Uterus (tissue), 4 donors: ENCODE measurements at regions of chr7 and their contacts with region 1.

Region 1: GRCh38 chr7:151315038-151315655 is 26.5 kb upstream of the NUB1 start:
- DNase-seq: peak; percentile 68 to 80
- H3K4me3 ChIP-seq: no peak overlapping the region
- H3K27ac ChIP-seq: no peak overlapping the region
- H3K4me1 ChIP-seq: no peaks in the 10 kb centered on the region
- H3K27me3 ChIP-seq: no peaks in the 10 kb centered on the region
- CTCF ChIP-seq: peak; percentile 80 to 84 (median 82)
- POLR2A ChIP-seq: no peak

Region 2: GRCh38 chr7:151038951-151039849 is 275.9 kb before region 1 on chr7:
- intact Hi-C with region 1: no loop called
- DNase-seq: peak; percentile 74 to 92
- H3K4me3 ChIP-seq: no peak overlapping the region
- H3K27ac ChIP-seq: peak overlapping the region; percentile 79
- H3K4me1 ChIP-seq: peaks cover 7 to 11% of the 10 kb centered on the region in 2 donors
- H3K27me3 ChIP-seq: no peaks in the 10 kb centered on the region
- CTCF ChIP-seq: no peak
- POLR2A ChIP-seq: peak in 1 of 2 donors; percentile 35

Region 3: DNA sequence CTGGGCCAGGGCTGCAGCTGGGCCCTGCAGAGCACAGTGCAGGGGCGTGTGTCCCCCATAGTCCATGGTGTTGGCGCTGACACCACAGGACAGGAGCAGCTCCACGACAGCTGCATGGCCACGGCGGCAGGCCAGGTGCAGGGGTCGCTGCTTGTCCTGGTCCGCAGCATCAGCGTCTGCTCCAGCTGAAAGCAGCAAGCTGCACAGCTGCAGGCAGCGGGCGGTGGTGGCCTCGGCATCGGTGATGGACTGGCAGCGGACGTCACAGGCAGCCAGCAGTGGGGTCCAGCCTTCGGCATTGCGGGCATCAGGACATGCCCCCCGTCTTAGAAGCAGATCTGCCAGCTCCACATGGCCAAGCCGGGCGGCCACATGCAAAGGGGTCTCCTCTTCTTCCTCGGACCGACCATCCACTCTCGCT is 134.1 kb before region 1 on chr7:
- intact Hi-C with region 1: no loop called
- DNase-seq: no peak
- H3K4me3 ChIP-seq: no peak overlapping the region
- H3K27ac ChIP-seq: no peak overlapping the region
- H3K4me1 ChIP-seq: no peaks in the 10 kb centered on the region
- H3K27me3 ChIP-seq: no peaks in the 10 kb centered on the region
- CTCF ChIP-seq: no peak
- POLR2A ChIP-seq: no peak

Region 4: DNA sequence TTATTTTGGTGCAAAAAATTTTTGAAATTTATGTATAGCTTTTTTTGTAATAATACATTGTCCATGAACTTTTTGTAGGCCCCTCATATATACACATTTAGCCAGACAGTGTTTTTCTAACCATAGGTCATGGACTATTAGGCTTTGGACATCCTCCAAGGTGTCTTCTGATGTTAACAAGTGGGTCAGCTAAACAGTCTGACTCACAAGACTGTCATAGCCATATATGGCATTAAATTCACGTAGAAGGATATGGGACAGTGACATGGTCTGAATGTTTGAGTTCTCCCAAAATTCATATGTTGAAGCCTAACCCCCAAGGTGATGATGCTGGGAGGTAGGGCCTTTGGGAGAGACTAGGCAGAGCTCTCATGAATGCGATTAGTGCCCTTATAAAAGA is 12.5 kb after region 1 on chr7:
- intact Hi-C with region 1: no loop called
- DNase-seq: no peak
- H3K4me3 ChIP-seq: no peak overlapping the region
- H3K27ac ChIP-seq: no peak overlapping the region
- H3K4me1 ChIP-seq: no peaks in the 10 kb centered on the region
- H3K27me3 ChIP-seq: no peaks in the 10 kb centered on the region
- CTCF ChIP-seq: no peak
- POLR2A ChIP-seq: no peak

Region 5: DNA sequence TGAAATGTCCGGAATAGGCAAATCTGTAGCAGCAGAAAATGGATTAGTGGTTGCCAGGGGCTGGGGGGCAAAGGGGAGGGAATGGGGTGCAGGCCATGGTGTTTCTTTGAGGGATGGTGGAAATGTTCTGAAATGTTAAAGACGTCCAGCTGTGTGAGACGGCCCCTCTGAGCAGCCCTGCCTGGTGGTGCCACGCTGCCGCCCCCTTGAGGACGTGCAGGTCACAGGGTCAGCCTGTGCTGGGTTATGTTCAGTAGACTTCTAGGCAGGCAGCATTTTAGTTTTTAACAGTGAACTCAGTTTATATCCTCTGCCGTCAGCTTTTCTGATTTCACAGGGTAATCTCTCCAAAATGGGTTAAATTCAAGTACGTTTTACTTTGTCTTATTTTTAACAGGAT is 35.9 kb after region 1 on chr7:
- intact Hi-C with region 1: loop called (anchors 5 kb)
- DNase-seq: no peak
- H3K4me3 ChIP-seq: no peak overlapping the region
- H3K27ac ChIP-seq: peak overlapping the region in 1 of 2 donors; percentile 8
- H3K4me1 ChIP-seq: no peaks in the 10 kb centered on the region
- H3K27me3 ChIP-seq: no peaks in the 10 kb centered on the region
- CTCF ChIP-seq: no peak
- POLR2A ChIP-seq: no peak

Region 6: GRCh38 chr7:151592868-151593486 is 277.8 kb after region 1 on chr7:
- intact Hi-C with region 1: no loop called
- DNase-seq: no peak
- H3K4me3 ChIP-seq: no peak overlapping the region
- H3K27ac ChIP-seq: no peak overlapping the region
- H3K4me1 ChIP-seq: no peaks in the 10 kb centered on the region
- H3K27me3 ChIP-seq: no peaks in the 10 kb centered on the region
- CTCF ChIP-seq: no peak
- POLR2A ChIP-seq: no peak